Heart right ventricle (tissue), 16 donors: ENCODE measurements at regions of chr9 and their contacts with region 1.

Region 1: GRCh38 chr9:96449845-96450612 is at the start of gene HABP4:
- DNase-seq: peak; percentile 96 to 98
- ATAC-seq: peak; percentile 99 to 100 (median 99)
- H3K4me3 ChIP-seq: peak within 1 kb of the TSS; percentile 68 to 97 (median 84)
- H3K27ac ChIP-seq: peak within 1 kb of the TSS; percentile 53 to 94 (median 84)
- H3K4me1 ChIP-seq: peaks cover 0 to 33% (median 11%) of the 10 kb centered on the region in 9 donors
- H3K27me3 ChIP-seq: peaks cover 0 to 30% (median 0%) of the 10 kb centered on the region in 7 donors
- CTCF ChIP-seq: peak in 1 of 9 donors; percentile 40
- total RNA-seq, gene HABP4: 20.8 to 30.4 (median 25.9) TPM

Region 2: GRCh38 chr9:96150324-96151227 is 299.5 kb before region 1 on chr9:
- intact Hi-C with region 1: no loop called
- DNase-seq: no peak
- ATAC-seq: peak in 2 of 8 donors; percentile 19 to 27
- H3K4me3 ChIP-seq: no peak overlapping the region
- H3K27ac ChIP-seq: no peak overlapping the region
- H3K4me1 ChIP-seq: peaks cover 0 to 35% (median 0%) of the 10 kb centered on the region in 9 donors
- H3K27me3 ChIP-seq: peaks cover 0 to 40% (median 11%) of the 10 kb centered on the region in 7 donors
- CTCF ChIP-seq: no peak

Region 3: DNA sequence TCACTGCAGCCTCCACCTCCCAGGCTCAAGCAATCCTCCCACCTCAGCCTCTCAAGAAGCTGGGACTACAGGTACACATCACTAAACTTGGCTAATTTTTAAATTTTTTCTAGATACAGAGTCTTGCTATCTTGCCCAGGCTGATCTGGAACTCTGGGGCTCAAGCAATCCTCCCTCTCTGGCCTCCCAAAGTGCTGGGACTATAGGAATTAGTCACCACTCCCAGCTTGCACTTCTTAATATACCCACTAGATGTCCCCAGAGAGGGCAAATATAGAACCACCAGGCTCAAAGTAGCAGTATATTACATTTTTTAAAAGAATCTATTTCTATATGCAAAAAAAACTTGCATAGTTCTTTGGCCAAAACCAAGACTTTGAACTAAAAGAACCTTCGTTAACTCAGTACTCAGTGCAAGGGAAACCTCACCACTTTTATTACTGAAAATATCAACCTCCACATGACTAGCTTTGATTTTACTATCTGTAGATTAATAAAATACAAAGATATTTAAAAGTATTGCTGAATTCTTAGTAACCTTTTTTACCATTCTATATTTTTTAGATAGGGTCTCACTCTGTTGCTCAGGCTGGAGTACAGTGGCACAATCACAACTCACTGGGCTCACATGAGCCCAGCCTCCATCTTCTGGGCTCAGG is 122.2 kb before region 1 on chr9:
- intact Hi-C with region 1: loop called in 4 of 10 experiments (anchors 5 to 10 kb)
- DNase-seq: peak in 1 of 2 donors; percentile 52
- ATAC-seq: peak; percentile 29 to 86 (median 70)
- H3K4me3 ChIP-seq: no peak overlapping the region
- H3K27ac ChIP-seq: no peak overlapping the region
- H3K4me1 ChIP-seq: no peaks in the 10 kb centered on the region
- H3K27me3 ChIP-seq: no peaks in the 10 kb centered on the region
- CTCF ChIP-seq: peak; percentile 81 to 90 (median 85)

Region 4: DNA sequence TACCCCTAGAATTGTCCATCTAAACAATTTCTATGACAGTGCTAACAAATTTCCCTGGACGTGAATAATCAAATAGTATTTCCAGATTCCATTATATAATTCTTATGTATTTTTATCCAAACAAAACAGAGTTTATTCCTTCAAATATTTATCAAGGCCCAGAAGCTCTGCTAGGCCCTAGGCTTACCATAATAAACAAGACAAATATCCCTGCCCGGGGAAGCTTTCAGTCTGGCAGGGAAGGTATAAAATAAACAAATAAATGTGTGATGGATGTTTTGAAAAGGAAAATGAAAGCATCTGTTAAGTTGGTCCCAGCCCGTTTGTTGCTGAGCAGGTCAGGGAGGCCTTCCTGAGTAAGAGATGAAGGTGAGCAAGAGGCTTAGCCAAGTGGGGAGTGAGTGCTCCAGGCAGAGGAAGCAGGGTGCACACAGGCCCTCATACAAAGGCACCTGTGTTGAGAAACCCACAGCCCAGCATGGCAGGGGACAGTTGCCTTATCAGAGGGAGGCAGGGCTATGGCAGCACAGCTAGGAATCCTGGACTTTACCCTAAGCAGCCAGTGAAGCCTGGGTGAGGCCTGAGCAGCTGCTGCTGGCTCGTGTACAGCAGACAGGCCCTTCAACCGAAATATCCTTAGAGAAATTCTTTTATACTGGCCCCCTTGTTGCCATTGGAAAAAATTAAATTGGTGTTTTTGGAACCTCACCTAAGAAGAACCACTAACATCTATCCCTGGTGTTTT is 58.8 kb before region 1 on chr9:
- intact Hi-C with region 1: no loop called
- DNase-seq: no peak
- ATAC-seq: peak in 1 of 8 donors; percentile 43
- H3K4me3 ChIP-seq: no peak overlapping the region
- H3K27ac ChIP-seq: peak overlapping the region in 1 of 10 donors; percentile 8
- H3K4me1 ChIP-seq: peaks cover 0 to 8% (median 5%) of the 10 kb centered on the region in 9 donors
- H3K27me3 ChIP-seq: no peaks in the 10 kb centered on the region
- CTCF ChIP-seq: no peak

Region 5: DNA sequence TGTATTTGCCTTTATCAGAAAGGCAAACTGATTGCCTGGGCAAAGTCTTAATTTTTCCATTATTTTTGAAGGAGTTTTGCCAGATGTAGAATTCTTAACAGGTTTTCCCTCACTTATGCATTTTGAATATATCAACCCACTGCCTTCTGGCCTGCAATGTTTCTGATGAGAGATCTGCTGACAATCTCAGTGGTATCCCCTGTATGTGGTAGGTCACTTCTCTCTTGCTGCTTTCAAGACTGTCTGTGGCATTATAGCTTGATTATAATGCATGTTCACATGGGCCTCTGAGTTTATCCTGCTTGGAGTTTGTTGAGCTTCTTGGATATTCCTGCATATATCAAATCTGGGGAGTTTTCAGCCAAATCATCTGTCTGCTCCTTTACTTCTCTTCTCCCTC is 82.1 kb after region 1 on chr9:
- intact Hi-C with region 1: no loop called
- DNase-seq: no peak
- ATAC-seq: no peak
- H3K4me3 ChIP-seq: no peak overlapping the region
- H3K27ac ChIP-seq: no peak overlapping the region
- H3K4me1 ChIP-seq: no peaks in the 10 kb centered on the region
- H3K27me3 ChIP-seq: no peaks in the 10 kb centered on the region
- CTCF ChIP-seq: no peak

Region 6: DNA sequence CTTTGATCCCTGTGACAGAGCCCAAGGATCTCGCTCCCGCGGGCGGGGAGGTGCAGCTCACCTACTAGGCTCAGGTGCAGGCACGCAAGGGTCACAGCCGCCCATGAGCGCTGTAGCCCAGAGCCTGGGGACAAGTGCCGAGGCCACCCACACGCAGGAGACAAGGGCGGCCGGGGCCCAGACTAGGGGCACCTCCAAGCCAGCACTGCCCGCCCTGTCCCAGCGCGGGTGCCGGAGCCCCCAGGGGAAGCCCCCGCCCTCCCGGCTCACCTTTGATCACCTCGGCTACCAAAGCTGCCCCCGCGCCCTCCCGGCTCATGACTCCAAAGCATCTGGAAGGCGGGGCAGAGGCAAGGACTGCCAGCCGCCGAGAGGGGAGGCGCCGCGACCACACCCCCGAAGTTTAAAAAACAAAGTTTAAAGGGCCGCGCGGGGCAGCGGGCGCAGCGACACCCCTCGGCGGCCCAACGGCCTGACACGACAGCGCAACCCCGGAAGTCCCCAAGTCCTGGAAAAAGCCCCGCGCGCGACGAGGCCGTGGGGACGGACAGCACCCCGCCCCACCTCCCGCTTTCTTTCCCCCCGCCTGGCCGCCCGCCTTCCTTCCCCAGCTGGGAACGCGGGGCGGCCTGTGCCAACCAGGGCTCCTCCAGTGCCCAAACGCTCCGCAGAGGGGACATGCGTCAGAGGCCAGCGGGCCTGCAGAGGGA is 116.6 kb after region 1 on chr9:
- intact Hi-C with region 1: loop called in 2 of 10 experiments (anchors 5 to 10 kb)
- DNase-seq: peak; percentile 81 to 83
- ATAC-seq: peak; percentile 92 to 95 (median 94)
- H3K4me3 ChIP-seq: peak overlapping the region; percentile 53 to 91 (median 81)
- H3K27ac ChIP-seq: peak overlapping the region; percentile 81 to 95 (median 86)
- H3K4me1 ChIP-seq: peaks cover 0 to 34% (median 20%) of the 10 kb centered on the region in 9 donors
- H3K27me3 ChIP-seq: peaks cover 0 to 4% (median 0%) of the 10 kb centered on the region in 7 donors
- CTCF ChIP-seq: peak; percentile 52 to 87 (median 71)

Region 7: GRCh38 chr9:96638606-96639364 is 188.8 kb after region 1 on chr9:
- intact Hi-C with region 1: loop called in 1 of 10 experiments (anchors 10 kb)
- DNase-seq: no peak
- ATAC-seq: no peak
- H3K4me3 ChIP-seq: no peak overlapping the region
- H3K27ac ChIP-seq: no peak overlapping the region
- H3K4me1 ChIP-seq: peaks cover 0 to 5% (median 0%) of the 10 kb centered on the region in 9 donors
- H3K27me3 ChIP-seq: no peaks in the 10 kb centered on the region
- CTCF ChIP-seq: no peak

Region 8: DNA sequence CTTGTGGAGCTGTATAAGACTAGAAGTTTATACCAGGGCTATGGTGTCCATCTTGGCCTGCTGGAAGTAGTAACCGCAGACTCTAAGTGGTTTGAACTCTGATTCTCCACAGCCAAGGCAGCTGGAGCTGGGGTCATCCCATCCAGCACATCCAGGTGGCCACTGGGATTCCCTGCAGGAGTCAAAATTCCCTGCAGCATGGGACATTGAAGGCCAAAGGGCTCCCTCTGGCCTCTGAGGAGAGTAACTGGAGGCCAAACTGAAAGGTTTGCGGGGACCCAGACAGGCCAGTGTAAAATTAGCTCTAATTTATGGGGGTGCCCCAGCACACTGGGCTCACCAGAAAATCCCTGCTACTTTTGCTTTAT is 217.3 kb after region 1 on chr9:
- intact Hi-C with region 1: loop called in 2 of 10 experiments (anchors 5 kb)
- DNase-seq: no peak
- ATAC-seq: no peak
- H3K4me3 ChIP-seq: no peak overlapping the region
- H3K27ac ChIP-seq: no peak overlapping the region
- H3K4me1 ChIP-seq: peaks cover 0 to 4% (median 0%) of the 10 kb centered on the region in 9 donors
- H3K27me3 ChIP-seq: no peaks in the 10 kb centered on the region
- CTCF ChIP-seq: no peak